BJ (cell line): ENCODE measurements at regions of chr12 and their contacts with region 1.

Region 1: GRCh38 chr12:122190842-122191668 is 8.1 kb downstream of the LRRC43 start:
- DNase-seq: no peak
- H3K4me3 ChIP-seq: no peak overlapping the region
- H3K27me3 ChIP-seq: no peaks in the 10 kb centered on the region
- CTCF ChIP-seq: peak; percentile 85

Region 2: DNA sequence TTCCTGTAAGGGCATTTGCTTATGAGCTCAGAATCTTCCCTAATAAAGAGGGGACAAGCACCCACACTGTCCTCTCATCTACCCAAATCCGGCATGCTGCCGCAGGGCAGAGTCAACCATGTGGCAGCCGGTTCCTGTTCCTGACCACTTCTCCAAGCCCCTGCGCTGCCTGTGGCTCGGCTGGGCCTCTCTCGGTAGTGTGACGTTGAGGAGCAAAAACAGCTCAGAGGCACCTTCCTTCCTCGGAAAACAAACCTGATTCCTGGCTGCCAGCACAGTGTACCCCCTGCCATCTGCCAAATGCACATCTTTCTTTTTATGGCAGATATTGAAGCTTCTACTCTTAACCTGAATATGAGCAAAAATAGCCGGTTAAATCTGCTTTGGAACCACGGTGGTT is 222.2 kb before region 1 on chr12:
- CTCF ChIA-PET with region 1: no interaction called
- POLR2A ChIA-PET with region 1: no interaction called
- DNase-seq: no peak
- H3K4me3 ChIP-seq: no peak overlapping the region
- H3K27me3 ChIP-seq: peaks cover 2% of the 10 kb centered on the region; the same call in 1 of the 2 replicates
- CTCF ChIP-seq: no peak

Region 3: DNA sequence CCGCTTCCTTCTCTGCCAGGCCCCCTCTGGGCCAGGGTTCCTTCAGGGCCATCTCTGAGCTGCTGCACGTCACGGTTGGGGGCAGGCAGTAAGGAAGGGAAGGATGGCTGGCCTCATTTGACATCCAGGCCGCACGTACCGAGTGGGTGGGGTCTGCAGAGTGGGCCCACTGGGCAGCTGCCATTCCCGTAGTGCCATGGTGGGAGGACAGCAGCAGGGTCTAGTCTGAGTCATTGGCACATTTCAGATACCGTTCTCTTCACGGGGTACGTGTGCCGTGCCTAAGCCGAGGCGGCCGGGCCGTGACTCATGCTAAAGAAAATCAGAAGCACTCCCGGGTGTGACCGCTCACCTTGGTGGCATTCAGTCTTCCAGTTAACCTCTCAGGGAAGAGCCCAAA is 60.9 kb before region 1 on chr12:
- CTCF ChIA-PET with region 1: interaction called, 29 read pairs
- POLR2A ChIA-PET with region 1: no interaction called
- DNase-seq: no peak
- H3K4me3 ChIP-seq: no peak overlapping the region
- H3K27me3 ChIP-seq: no peaks in the 10 kb centered on the region
- CTCF ChIP-seq: no peak